RWPE1 (cell line): ENCODE measurements at regions of chr11 and their contacts with region 1.

Region 1: DNA sequence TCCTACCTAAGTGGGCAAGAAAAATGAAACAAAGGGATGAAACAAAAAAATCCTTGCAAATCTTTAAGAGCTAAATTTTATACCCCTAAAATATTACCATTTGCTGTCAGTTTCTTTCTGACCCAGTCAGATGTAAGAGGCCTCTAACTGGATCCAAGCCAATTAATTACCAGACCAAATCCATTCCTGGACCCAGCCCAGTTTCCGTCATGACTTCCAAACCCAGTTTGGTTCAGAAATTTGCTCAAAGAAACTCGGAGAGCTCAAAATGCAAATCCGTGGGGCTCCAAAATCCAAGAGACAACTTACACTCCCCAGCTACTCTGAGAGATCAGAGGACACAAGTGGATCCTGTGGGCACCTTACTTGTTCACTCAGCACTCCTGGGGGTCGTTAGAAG is 46.8 kb downstream of the TRIM44 start:
- DNase-seq: no peak
- H3K27ac ChIP-seq: no peak overlapping the region
- CTCF ChIP-seq: no peak

Region 2: DNA sequence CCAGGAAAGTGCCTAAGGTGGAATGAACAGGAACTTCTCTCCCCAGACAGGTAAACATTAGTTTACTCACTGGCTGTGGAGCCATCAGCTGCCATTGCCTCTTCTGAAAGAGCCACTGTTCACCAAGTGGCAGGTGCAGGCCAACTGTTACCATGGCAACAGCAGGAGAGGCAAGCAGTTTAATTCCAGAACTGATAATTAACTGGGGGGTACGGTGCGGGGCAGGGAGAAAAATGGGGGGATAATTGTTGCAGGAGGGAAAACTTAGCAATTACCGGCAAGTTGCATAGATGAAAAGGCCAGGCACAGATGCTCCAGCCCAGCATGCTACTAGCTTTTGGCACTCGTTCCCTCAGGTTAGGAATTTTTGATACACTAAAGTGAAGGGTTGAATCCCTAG is 38.3 kb after region 1 on chr11:
- CTCF ChIA-PET with region 1: no interaction called
- POLR2A ChIA-PET with region 1: interaction called, 12 read pairs
- DNase-seq: no peak
- H3K27ac ChIP-seq: no peak overlapping the region
- CTCF ChIP-seq: no peak